ENCODE measurements at regions of chr5 and their contacts with region 1.

Region 1: DNA sequence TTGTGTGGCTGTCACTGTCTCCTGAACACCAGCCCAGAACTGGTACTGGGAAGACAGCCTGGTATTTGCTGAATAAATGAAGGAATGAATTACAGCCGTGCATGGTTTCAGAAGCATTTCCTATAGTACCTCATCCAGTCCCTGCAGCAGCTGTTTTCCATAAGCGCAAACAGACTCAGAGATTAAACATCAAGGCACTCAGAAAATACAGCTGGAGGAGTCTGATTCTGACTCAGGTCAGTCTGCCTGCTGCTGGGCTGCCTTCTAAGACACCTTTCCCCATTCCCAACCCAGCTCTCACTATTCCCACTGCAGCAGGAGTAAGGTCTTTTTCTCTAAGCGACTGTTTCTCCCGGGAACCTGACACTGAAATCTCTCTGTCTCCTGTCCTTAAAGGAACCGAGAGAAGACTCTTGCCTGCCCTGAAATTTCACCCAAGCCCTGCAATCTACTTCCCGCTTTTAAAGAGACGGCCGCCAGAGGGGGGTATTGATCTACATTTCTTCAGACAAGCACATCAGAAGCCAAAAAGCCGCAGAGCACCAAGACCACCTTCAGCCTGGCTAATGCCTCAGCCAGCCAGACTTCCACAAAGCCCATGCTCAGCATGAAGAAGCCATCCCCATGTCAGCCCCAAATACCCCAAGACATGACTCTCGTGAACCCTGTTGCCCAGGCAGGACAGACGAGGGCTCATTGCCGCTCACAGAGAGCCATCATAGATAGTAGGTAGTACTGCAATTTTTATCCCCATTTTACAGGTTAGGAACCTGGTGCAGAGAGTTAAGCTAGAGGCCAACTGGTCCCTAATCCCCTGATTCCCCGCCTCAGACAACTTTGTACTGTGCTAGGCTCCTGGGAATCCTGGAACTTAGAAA is 5.4 kb upstream of the FOXI1 start:
- DNase-seq: peak; percentile 77 to 81
- H3K4me3 ChIP-seq: no peak overlapping the region
- H3K4me3 Mint-ChIP-seq: no peak overlapping the region
- H3K27ac Mint-ChIP-seq: no peak overlapping the region
- H3K4me1 ChIP-seq: no peaks in the 10 kb centered on the region
- H3K4me1 Mint-ChIP-seq: peaks cover 4% of the 10 kb centered on the region
- H3K27me3 ChIP-seq: no peaks in the 10 kb centered on the region; the same call in 1 of the 2 replicates
- H3K27me3 Mint-ChIP-seq: peaks cover 11% of the 10 kb centered on the region
- CTCF ChIP-seq: peak; percentile 58 to 68

Region 2: GRCh38 chr5:170070556-170071412 is 29.5 kb before region 1 on chr5:
- CTCF ChIA-PET with region 1: no interaction called
- POLR2A ChIA-PET with region 1: no interaction called
- intact Hi-C with region 1: no loop called
- DNase-seq: peak in 1 of 2 experiments; percentile 60
- H3K4me3 ChIP-seq: no peak overlapping the region
- H3K4me3 Mint-ChIP-seq: no peak overlapping the region
- H3K27ac Mint-ChIP-seq: no peak overlapping the region
- H3K4me1 ChIP-seq: no peaks in the 10 kb centered on the region
- H3K4me1 Mint-ChIP-seq: no peaks in the 10 kb centered on the region
- H3K27me3 ChIP-seq: no peaks in the 10 kb centered on the region; the same call in 1 of the 2 replicates
- H3K27me3 Mint-ChIP-seq: peaks cover 17% of the 10 kb centered on the region
- CTCF ChIP-seq: peak; percentile 76 to 94

Region 3: GRCh38 chr5:170183816-170184687 is 83.7 kb after region 1 on chr5:
- CTCF ChIA-PET with region 1: interaction called, 13 read pairs
- POLR2A ChIA-PET with region 1: no interaction called
- intact Hi-C with region 1: loop called (anchors 1 kb)
- DNase-seq: peak; percentile 72 to 81
- H3K4me3 ChIP-seq: no peak overlapping the region
- H3K4me3 Mint-ChIP-seq: no peak overlapping the region
- H3K27ac Mint-ChIP-seq: no peak overlapping the region
- H3K4me1 ChIP-seq: no peaks in the 10 kb centered on the region
- H3K4me1 Mint-ChIP-seq: peaks cover 7% of the 10 kb centered on the region
- H3K27me3 ChIP-seq: no peaks in the 10 kb centered on the region; the same call in 1 of the 2 replicates
- H3K27me3 Mint-ChIP-seq: no peaks in the 10 kb centered on the region
- CTCF ChIP-seq: peak; percentile 74 to 90

Region 4: DNA sequence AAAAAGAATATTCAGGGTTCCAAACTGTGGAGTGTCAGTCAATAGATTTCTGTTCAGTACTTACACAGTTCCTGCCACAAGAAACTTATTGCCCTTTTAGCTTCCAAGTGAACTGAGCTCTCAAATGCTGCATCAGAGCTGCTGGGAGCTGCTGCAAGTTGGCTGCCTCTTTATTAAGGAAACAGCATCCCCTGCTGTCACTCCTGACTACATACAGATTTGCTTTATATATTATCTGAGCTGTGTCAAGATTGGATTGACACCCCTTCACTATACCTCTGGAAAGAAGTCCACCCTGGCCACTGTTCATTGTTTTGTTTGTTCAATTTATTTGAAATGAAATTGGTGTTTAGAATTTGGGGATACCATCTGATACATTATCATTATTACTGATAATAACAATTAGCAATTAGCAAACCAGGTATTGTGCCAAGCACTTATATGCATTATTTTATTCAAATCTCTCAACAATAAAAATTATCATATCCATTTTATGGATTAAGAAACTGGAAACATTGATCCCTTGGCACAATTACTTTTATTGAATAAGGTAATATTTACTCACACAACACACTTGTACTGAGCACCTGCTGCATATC is 116.1 kb after region 1 on chr5:
- CTCF ChIA-PET with region 1: interaction called, 18 read pairs
- POLR2A ChIA-PET with region 1: no interaction called
- intact Hi-C with region 1: loop called (anchors 1 kb)
- DNase-seq: peak; percentile 45 to 49
- H3K4me3 ChIP-seq: no peak overlapping the region
- H3K4me3 Mint-ChIP-seq: no peak overlapping the region
- H3K27ac Mint-ChIP-seq: no peak overlapping the region
- H3K4me1 ChIP-seq: no peaks in the 10 kb centered on the region
- H3K4me1 Mint-ChIP-seq: no peaks in the 10 kb centered on the region
- H3K27me3 ChIP-seq: no peaks in the 10 kb centered on the region
- H3K27me3 Mint-ChIP-seq: peaks cover 7% of the 10 kb centered on the region
- CTCF ChIP-seq: peak; percentile 37 to 74

Region 5: DNA sequence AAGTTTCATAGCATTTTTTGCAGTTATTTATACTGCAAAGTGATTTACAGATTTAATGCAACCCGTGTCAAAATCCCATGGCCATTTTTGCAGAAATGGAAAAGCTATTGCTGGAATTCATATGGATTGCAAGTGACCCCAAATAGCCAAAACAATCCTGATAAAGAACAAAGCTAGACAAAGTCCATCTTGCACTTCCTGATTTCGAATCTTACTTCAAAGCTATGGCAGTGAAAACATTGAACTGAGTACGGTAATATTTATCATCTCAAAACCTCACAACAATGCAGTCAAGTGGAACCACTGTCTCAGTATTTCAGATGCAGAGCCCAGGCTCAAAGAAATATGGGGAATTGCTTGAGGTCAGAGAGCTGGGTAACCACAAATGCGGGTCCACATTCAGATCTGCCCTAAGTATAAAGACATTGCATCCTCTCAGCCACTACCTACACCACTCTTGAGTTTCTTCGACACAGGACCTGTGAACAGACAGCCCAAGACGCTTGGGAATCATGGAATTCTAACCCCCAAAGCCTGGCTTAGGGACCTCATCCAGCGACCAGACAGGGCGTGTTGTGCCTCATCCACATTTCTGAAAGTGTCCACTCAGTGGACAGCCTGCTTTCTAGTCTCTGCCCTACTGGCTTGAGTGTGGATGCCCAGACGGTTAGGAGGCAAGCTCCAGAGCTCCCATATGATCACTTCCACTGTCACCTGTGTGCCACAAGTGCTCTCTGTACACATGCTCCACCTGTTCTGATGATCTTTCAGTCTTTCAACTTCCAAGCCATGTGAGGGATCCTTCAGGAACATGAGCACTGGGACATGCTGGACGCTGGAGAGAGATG is 364.2 kb after region 1 on chr5:
- CTCF ChIA-PET with region 1: no interaction called
- POLR2A ChIA-PET with region 1: no interaction called
- intact Hi-C with region 1: no loop called
- DNase-seq: peak in 1 of 2 experiments; percentile 5
- H3K4me3 ChIP-seq: no peak overlapping the region
- H3K4me3 Mint-ChIP-seq: no peak overlapping the region
- H3K27ac Mint-ChIP-seq: no peak overlapping the region
- H3K4me1 ChIP-seq: peaks cover 12% of the 10 kb centered on the region
- H3K4me1 Mint-ChIP-seq: no peaks in the 10 kb centered on the region
- H3K27me3 ChIP-seq: no peaks in the 10 kb centered on the region
- H3K27me3 Mint-ChIP-seq: peaks cover 2% of the 10 kb centered on the region
- CTCF ChIP-seq: no peak

Measured in Caco-2 (cell line).